Endothelial cell of umbilical vein (primary cell): ENCODE measurements at regions of chr9 and their contacts with region 1.

Region 1: DNA sequence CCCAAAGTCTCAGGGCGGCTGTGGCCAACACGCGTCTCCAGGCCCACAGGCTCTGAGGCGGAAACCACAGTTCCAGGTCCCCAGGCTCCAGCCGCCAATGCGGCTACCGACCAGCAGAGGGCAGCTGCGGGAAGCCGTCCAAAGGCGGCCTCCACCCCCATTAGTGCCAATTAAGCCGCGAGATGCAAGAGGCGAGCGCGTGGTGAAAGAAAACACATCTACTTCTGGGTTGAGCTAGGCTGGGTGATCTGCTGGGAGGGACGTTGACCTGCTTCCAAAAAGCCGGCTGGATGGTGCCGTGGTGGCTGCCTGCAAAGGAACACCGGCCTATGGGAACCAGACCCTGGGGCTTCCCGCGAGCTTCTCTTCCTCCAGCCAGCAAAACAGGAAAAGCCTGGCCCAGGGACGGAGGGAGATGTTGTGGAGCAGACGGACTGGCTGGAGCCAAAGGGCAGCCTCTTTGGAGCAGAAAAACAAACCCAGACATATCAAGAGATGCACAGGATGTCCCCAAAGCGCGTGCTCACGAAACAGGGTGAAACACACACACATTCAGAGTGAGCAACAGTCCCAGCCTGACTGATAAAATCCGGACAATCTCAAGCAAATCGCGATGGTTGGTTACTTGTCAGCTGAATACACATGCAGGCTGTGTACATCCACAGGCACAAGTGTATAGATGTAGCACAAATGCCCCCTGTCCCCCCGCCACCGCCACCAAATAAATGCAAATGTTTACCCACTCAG is 187.1 kb upstream of the BRINP1 start:
- DNase-seq: peak; percentile 80
- H3K4me3 ChIP-seq: peak overlapping the region in 2 of 3 experiments; percentile 15 to 30
- H3K27ac ChIP-seq: no peak overlapping the region
- H3K4me1 ChIP-seq: peaks cover 5% of the 10 kb centered on the region
- H3K27me3 ChIP-seq: no peaks in the 10 kb centered on the region
- CTCF ChIP-seq: peak; percentile 88 to 96
- POLR2A ChIP-seq: no peak

Region 2: GRCh38 chr9:117782931-117783788 is 1773.1 kb before region 1 on chr9:
- CTCF ChIA-PET with region 1: interaction called, 3 read pairs
- POLR2A ChIA-PET with region 1: no interaction called
- dilution Hi-C with region 1: no loop called
- intact Hi-C with region 1: loop called (anchors 1 kb)
- DNase-seq: peak; percentile 83
- H3K4me3 ChIP-seq: peak overlapping the region; percentile 39 to 77 (median 52)
- H3K27ac ChIP-seq: no peak overlapping the region
- H3K4me1 ChIP-seq: peaks cover 7% of the 10 kb centered on the region
- H3K27me3 ChIP-seq: no peaks in the 10 kb centered on the region
- CTCF ChIP-seq: peak; percentile 80
- POLR2A ChIP-seq: no peak

Region 3: DNA sequence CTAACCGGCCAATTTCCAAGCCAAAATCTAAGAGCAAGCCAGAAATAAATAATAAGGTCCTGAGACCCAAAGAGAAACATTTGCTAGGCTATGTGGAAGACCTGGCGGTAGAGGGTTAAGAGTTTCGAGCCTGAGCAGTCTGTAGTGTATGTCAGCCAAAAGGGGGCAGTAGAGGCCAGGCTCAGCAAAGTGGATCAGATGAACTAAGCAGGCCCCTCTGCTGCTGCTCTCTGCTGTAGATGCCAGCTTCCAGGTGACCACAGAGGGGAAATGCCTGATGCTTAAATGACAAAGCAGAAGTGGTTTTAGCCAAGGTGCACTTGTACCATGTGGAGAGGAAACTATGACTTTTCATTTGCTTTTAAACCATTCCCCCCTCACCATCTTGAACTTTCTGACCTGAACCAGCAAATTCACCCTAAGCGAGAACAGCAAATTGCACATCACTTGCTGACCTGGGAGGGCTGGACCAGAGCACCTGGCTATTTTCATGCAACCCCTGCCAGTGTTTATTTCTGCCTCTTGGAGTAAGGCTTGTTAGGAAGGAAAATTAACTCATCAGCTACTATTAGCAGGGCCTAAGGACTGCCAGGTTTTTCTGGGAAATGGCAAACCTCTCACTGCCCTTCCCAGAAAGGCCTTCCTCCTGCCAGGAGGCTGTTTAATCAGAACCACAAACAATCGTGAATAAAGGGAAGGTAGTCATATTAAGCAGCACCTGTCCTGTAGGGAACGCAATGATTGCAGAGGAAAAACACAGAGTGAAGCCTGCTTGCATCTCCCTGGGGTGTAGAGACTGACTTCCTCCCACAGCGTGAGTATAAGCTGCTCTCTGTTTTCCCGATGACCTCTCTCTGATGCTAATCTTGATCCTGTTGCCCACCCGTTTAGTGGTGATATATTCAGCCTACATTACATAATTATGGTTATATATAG is 1033.9 kb before region 1 on chr9:
- CTCF ChIA-PET with region 1: interaction called, 3 read pairs
- POLR2A ChIA-PET with region 1: no interaction called
- dilution Hi-C with region 1: no loop called
- intact Hi-C with region 1: loop called (anchors 1 kb)
- DNase-seq: peak; percentile 79
- H3K4me3 ChIP-seq: no peak overlapping the region
- H3K27ac ChIP-seq: no peak overlapping the region
- H3K4me1 ChIP-seq: no peaks in the 10 kb centered on the region
- H3K27me3 ChIP-seq: peaks cover 0 to 2% of the 10 kb centered on the region in 2 experiments
- CTCF ChIP-seq: peak; percentile 72 to 89
- POLR2A ChIP-seq: no peak

Region 4: DNA sequence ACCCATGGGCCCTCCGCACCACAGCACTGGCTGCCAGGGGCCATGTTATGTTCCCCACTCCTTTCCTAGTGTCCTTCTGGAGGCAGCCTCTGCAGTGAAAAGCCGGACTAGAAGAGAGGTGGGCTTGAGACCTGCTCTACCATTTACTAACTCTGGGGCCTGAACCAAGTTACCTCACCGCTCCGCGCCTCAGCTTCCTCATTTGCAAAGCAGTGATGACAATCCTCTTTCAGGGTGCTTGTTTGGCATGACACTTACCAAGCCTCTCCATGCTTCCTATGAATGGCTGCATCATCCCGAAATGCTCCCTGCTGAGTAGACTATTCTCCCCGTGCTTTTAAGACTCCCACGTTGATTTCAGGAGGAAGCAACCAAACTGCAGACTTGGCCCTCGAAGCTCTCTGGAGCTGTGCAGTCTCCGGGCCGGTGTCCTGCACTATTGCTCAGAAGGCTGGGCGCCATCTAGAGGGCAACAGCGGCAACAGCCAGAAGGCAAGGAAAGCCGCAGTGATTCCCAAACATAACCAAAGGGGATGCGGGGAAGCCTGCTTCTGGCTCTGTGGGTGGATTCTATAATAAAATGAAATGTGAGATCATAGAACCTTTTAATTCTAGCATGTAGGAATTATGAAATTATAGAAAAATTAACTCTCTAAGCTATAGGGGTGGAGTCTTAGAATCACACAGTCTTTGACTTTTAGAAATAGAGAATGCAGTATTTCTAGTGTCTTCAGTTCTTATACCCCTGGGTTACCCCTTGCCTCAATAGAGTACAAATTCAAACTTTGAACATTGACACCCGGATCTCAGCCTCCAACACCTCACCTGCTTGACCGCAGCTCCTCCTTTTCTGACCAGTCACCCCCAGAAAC is 412.8 kb after region 1 on chr9:
- CTCF ChIA-PET with region 1: interaction called, 5 read pairs
- POLR2A ChIA-PET with region 1: no interaction called
- dilution Hi-C with region 1: no loop called
- intact Hi-C with region 1: loop called (anchors 1 kb)
- DNase-seq: peak; percentile 40
- H3K4me3 ChIP-seq: no peak overlapping the region
- H3K27ac ChIP-seq: no peak overlapping the region
- H3K4me1 ChIP-seq: no peaks in the 10 kb centered on the region
- H3K27me3 ChIP-seq: no peaks in the 10 kb centered on the region
- CTCF ChIP-seq: peak; percentile 76 to 84
- POLR2A ChIP-seq: no peak

Region 5: DNA sequence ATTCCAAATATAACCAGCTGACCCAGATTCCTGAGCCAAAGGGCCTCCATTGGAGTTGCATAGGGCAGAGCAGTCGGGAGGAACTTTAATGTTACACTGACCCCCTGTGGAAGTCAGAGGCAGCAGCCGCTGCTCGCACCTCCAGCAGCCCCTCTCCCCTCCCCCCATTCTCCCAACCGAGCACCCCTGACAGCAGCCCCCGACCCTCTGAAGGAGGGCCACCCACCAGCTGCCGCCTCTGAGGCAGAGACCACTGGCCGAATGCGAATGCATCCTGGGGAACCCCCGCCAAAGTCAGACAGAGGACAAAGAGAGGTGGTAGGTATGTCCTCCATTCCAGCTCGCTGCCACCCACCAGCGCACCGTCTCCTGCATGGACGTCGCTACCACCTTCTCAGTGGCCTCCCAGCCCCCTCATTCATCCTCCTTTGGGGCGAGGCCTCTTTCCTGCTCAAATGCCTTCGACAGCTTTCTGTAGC is 792.7 kb after region 1 on chr9:
- CTCF ChIA-PET with region 1: no interaction called
- POLR2A ChIA-PET with region 1: no interaction called
- dilution Hi-C with region 1: no loop called
- intact Hi-C with region 1: loop called (anchors 1 kb)
- DNase-seq: peak; percentile 39
- H3K4me3 ChIP-seq: no peak overlapping the region
- H3K27ac ChIP-seq: no peak overlapping the region
- H3K4me1 ChIP-seq: no peaks in the 10 kb centered on the region
- H3K27me3 ChIP-seq: no peaks in the 10 kb centered on the region
- CTCF ChIP-seq: peak; percentile 48 to 73
- POLR2A ChIP-seq: no peak